ENCODE measurements at regions of chr6 and their contacts with region 1.

Region 1: DNA sequence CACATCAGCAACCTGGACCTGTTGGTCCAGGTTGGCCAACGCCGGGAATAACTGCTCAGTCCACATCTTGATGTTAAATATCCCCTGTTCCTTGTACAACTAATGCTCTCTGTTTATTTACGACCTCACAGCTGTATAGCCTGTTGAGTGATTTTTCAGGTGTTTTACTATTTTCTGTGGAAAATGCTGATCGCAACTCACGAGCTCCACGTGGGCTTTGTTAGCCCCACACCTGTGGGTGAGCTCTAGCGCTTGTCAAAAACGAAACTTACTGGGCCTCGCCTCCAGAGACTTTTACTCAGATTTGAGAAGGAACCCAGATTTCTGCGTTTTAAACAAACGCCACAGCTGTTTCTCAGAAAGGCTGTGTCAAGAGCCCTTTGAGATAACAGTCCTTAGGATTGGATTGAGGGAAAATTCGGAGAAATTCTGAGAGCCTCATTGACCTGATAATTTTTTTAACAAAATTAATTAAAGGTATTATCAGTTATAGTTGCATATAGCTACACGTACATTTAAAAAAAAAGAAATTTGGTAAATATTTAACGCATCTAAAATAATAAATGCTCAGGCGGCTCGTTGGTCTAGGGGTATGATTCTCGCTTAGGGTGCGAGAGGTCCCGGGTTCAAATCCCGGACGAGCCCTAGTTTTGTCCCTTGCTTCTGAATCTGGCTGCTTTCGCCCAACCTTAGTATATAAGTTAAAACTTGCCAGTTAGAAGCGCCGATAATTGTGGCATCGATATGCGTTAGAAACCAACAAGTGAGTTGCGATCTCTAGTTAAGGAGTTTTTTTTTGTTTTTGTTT is 16.7 kb downstream of the HMGN4 start:
- DNase-seq: peak in 1 of 2 experiments; percentile 74
- ATAC-seq: peak in 1 of 2 experiments; percentile 34; a peak in 2 of 6 replicates
- H3K4me3 ChIP-seq: peak overlapping the region; percentile 48
- H3K27ac ChIP-seq: peak overlapping the region; percentile 41 to 81; a peak in 5 of 6 replicates
- H3K4me1 ChIP-seq: peaks cover 9% of the 10 kb centered on the region; the same call in 2 of the 3 replicates
- CTCF ChIP-seq: no peak
- EP300 ChIP-seq: no peak
- POLR2A ChIP-seq: no peak
- RAD21 ChIP-seq: no peak

Region 2: GRCh38 chr6:26537846-26538571 is 16.9 kb before region 1 on chr6 and contains the start of gene HMGN4:
- CTCF ChIA-PET with region 1: interaction called, 7 read pairs
- POLR2A ChIA-PET with region 1: interaction called, 14 read pairs
- DNase-seq: peak in 1 of 2 experiments; percentile 90
- ATAC-seq: peak; percentile 85 to 89
- H3K4me3 ChIP-seq: peak within 1 kb of the TSS; percentile 97
- H3K27ac ChIP-seq: peak within 1 kb of the TSS; percentile 85 to 100
- H3K4me1 ChIP-seq: peaks cover 44% of the 10 kb centered on the region
- CTCF ChIP-seq: 0 out of 3 replicates have a peak, but pooled peaks have one; percentile 18
- EP300 ChIP-seq: no peak
- POLR2A ChIP-seq: peak; percentile 64
- RAD21 ChIP-seq: no peak; a peak in 1 of 5 replicates
- polyA plus RNA-seq, gene HMGN4: 59.0 and 62.9 TPM in 2 replicates

Region 3: GRCh38 chr6:26568601-26569432 is 13.9 kb after region 1 on chr6:
- CTCF ChIA-PET with region 1: interaction called, 9 read pairs
- POLR2A ChIA-PET with region 1: interaction called, 10 read pairs
- DNase-seq: peak in 1 of 2 experiments; percentile 93
- ATAC-seq: peak; percentile 71 to 74
- H3K4me3 ChIP-seq: peak overlapping the region; percentile 66
- H3K27ac ChIP-seq: peak overlapping the region; percentile 53 to 86; a peak in 5 of 6 replicates
- H3K4me1 ChIP-seq: peaks cover 6% of the 10 kb centered on the region; the same call in 1 of the 3 replicates
- CTCF ChIP-seq: peak; percentile 41
- EP300 ChIP-seq: no peak
- POLR2A ChIP-seq: no peak
- RAD21 ChIP-seq: peak; percentile 61 to 68

Region 4: DNA sequence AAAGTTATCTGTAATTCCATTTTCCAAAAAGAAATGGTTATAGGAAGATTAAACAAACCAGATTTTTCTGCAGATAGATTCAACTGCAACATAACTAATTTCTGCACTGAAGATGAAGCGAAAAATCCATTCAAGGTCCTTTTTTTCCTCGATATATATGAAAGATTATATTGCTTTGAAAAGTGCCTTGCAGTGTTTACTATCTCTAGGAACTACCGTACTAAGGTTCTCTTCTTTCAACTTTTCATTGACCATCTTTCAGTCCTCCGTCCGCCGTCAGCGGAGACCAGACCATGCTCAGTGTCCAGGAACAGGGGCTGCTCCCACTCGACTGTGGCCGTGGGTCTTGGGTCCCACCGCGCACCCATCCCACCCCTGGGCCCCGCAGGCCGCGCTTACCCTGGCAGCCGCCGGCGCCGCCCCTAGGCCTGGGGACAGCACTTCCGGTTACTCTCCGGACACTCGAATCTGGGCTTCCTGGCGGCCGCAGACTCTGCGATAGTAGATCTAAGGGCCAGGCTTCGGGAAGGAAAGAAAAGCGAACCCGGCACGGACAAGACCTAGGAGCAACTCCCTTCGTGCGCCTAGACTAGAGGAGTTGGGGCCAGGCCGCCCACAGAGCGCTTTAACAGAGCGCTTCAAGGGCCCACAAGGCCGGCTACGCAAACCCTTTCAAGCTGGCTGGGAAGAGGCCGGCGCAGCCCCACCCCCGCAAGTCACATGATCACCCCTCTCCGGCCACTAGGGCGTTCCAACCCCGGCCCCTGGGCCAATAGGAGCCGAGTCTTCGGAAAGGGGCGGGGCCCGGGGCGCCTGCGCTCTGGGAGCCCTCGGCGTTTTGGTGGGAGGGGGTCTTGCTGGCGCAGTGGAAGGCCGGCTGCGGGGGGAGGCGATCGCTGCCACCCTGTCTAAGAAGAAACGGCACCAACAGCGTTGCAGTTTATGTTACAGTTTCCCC is 104.4 kb after region 1 on chr6 and contains the start of gene ZNF322:
- CTCF ChIA-PET with region 1: no interaction called
- POLR2A ChIA-PET with region 1: no interaction called
- DNase-seq: peak; percentile 86 to 90
- ATAC-seq: peak; percentile 97 to 100
- H3K4me3 ChIP-seq: peak within 1 kb of the TSS; percentile 65
- H3K27ac ChIP-seq: peak within 1 kb of the TSS; percentile 85
- H3K4me1 ChIP-seq: 0 out of 3 replicates have a peak, but pooled peaks cover 3% of the 10 kb centered on the region
- CTCF ChIP-seq: no peak
- EP300 ChIP-seq: no peak
- POLR2A ChIP-seq: peak; percentile 55
- RAD21 ChIP-seq: no peak
- polyA plus RNA-seq, gene ZNF322: 12.3 and 14.5 TPM in 2 replicates

Measured in A549 (cell line).